GM10248 (cell line): ENCODE measurements at regions of chr2 and their contacts with region 1.

Region 1: GRCh38 chr2:62055724-62056336 is 140.1 kb upstream of the B3GNT2 start:
- DNase-seq: no peak
- CTCF ChIP-seq: no peak

Region 2: DNA sequence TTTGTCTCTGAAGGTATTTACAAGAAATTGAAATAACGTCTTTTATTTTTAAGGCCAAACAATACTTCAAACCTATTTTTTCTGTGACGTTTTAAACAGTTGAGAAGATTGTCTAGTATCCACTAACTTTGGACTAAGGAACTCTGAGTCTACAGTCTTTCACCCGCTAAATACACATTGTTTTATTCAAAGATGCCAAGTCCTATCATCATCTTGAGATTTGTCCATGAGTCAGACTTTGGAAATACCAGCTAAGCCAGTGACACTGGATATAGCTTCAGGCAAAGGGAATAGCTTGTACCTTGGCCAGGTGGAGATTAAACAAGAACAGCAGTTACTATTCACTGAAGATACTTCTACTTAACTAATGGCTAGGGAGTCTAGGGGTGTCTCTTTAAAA is 12.9 kb before region 1 on chr2:
- CTCF ChIA-PET with region 1: interaction called, 10 read pairs
- POLR2A ChIA-PET with region 1: no interaction called
- DNase-seq: no peak
- CTCF ChIP-seq: no peak

Region 3: GRCh38 chr2:62089658-62090057 is 33.8 kb after region 1 on chr2:
- CTCF ChIA-PET with region 1: no interaction called
- POLR2A ChIA-PET with region 1: no interaction called
- DNase-seq: no peak
- CTCF ChIP-seq: no peak